ENCODE measurements at regions of chr9 and their contacts with region 1.

Region 1: GRCh38 chr9:2132484-2133082 is 117.4 kb downstream of the SMARCA2 start:
- DNase-seq: no peak
- H3K4me3 ChIP-seq: no peak overlapping the region
- H3K27ac ChIP-seq: no peak overlapping the region
- H3K4me1 ChIP-seq: peaks cover 0 to 4% (median 0%) of the 10 kb centered on the region in 4 experiments; a peak in 1 of 7 replicates
- H3K27me3 ChIP-seq: no peaks in the 10 kb centered on the region
- CTCF ChIP-seq: peak in 2 of 3 experiments; percentile 46 to 61; a peak in 2 of 4 replicates
- EP300 ChIP-seq: no peak
- POLR2A ChIP-seq: no peak
- RAD21 ChIP-seq: peak; percentile 88 to 91

Region 2: DNA sequence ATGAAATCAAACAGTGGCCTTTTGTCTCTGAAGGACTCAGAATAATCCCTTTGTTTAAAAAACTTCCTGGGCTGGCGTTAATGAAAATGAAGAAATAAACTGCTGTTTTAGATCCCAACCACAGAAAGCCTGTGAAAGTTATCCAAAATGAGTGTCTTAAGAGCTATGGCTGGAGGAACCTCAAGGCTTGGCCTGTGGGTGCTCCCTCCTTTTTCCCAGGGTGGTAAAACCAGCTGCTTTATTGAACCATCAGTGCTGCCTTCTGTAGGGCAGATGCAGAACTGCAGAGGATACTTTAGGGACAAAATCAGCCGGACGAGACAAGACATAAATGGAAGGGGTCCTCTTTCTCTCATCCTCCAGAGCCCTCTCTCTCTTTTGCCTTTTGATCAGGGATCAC is 16.5 kb before region 1 on chr9:
- CTCF ChIA-PET with region 1: interaction called, 26 read pairs
- POLR2A ChIA-PET with region 1: no interaction called
- DNase-seq: peak in 1 of 2 experiments; percentile 70
- H3K4me3 ChIP-seq: no peak overlapping the region
- H3K27ac ChIP-seq: no peak overlapping the region
- H3K4me1 ChIP-seq: no peaks in the 10 kb centered on the region
- H3K27me3 ChIP-seq: no peaks in the 10 kb centered on the region
- CTCF ChIP-seq: peak; percentile 30 to 85 (median 67)
- EP300 ChIP-seq: no peak
- POLR2A ChIP-seq: no peak
- RAD21 ChIP-seq: peak; percentile 60 to 72

Region 3: DNA sequence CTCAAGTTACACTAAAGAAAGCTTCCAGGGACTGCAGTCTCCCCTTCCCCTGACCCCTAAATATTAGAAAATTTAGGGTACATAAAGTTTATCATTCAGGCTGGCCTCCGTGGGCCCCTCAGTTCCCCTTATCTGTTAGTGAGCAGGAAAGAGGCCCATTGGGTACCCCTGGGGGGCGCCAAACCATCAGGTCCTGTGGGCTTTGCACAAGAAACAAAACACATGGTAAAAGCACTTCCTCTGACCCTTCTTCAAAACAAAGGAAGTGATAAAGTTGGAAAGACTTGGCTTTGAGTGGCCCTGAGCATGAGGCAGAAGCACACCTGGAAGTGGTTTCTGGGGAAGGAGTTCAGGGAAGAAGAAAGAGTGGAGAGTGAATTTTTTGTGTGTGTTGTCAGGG is 95.5 kb after region 1 on chr9:
- CTCF ChIA-PET with region 1: interaction called, 13 read pairs
- POLR2A ChIA-PET with region 1: no interaction called
- DNase-seq: peak; percentile 44 to 85
- H3K4me3 ChIP-seq: no peak overlapping the region
- H3K27ac ChIP-seq: no peak overlapping the region
- H3K4me1 ChIP-seq: no peaks in the 10 kb centered on the region
- H3K27me3 ChIP-seq: no peaks in the 10 kb centered on the region
- CTCF ChIP-seq: peak; percentile 60 to 77 (median 60)
- EP300 ChIP-seq: no peak
- POLR2A ChIP-seq: no peak
- RAD21 ChIP-seq: peak; percentile 90 to 91

Region 4: GRCh38 chr9:2662496-2662895 is 529.9 kb after region 1 on chr9:
- CTCF ChIA-PET with region 1: interaction called, 15 read pairs
- POLR2A ChIA-PET with region 1: no interaction called
- DNase-seq: peak in 1 of 2 experiments; percentile 57
- H3K4me3 ChIP-seq: no peak overlapping the region
- H3K27ac ChIP-seq: no peak overlapping the region
- H3K4me1 ChIP-seq: no peaks in the 10 kb centered on the region
- H3K27me3 ChIP-seq: no peaks in the 10 kb centered on the region
- CTCF ChIP-seq: peak; percentile 55 to 69 (median 61)
- EP300 ChIP-seq: no peak
- POLR2A ChIP-seq: no peak
- RAD21 ChIP-seq: peak; percentile 76 to 81

Measured in H1 (cell line).